ENCODE measurements at regions of chr6 and their contacts with region 1.

Region 1: GRCh38 chr6:87589693-87590549 is at the starts of genes ORC3 and RARS2:
- DNase-seq: peak; percentile 96
- H3K4me3 Mint-ChIP-seq: peak within 1 kb of the TSS; percentile 94
- H3K27ac Mint-ChIP-seq: peak within 1 kb of the TSS; percentile 77
- H3K4me1 Mint-ChIP-seq: peaks cover 43% of the 10 kb centered on the region
- H3K27me3 Mint-ChIP-seq: no peaks in the 10 kb centered on the region
- CTCF ChIP-seq: no peak
- total RNA-seq, gene ORC3: 19.4 and 21.1 TPM in 2 replicates
- total RNA-seq, gene RARS2: 29.9 and 31.0 TPM in 2 replicates

Region 2: GRCh38 chr6:87393022-87393622 is 196.8 kb before region 1 on chr6:
- CTCF ChIA-PET with region 1: interaction called, 9 read pairs
- POLR2A ChIA-PET with region 1: interaction called, 4 read pairs
- intact Hi-C with region 1: loop called (anchors 5 kb)
- DNase-seq: peak; percentile 58
- H3K4me3 Mint-ChIP-seq: no peak overlapping the region
- H3K27ac Mint-ChIP-seq: no peak overlapping the region
- H3K4me1 Mint-ChIP-seq: no peaks in the 10 kb centered on the region
- H3K27me3 Mint-ChIP-seq: no peaks in the 10 kb centered on the region
- CTCF ChIP-seq: peak; percentile 71

Region 3: GRCh38 chr6:87407901-87408720 is 181.8 kb before region 1 on chr6 and contains the start of gene CFAP206:
- CTCF ChIA-PET with region 1: no interaction called
- POLR2A ChIA-PET with region 1: interaction called, 3 read pairs
- intact Hi-C with region 1: loop called (anchors 5 kb)
- DNase-seq: peak; percentile 76
- H3K4me3 Mint-ChIP-seq: peak within 1 kb of the TSS; percentile 80
- H3K27ac Mint-ChIP-seq: peak within 1 kb of the TSS; percentile 37
- H3K4me1 Mint-ChIP-seq: no peaks in the 10 kb centered on the region
- H3K27me3 Mint-ChIP-seq: peaks cover 15% of the 10 kb centered on the region
- CTCF ChIP-seq: peak; percentile 19
- total RNA-seq, gene CFAP206: 0.27 TPM in 1 of 2 replicates, not detected in the other

Region 4: DNA sequence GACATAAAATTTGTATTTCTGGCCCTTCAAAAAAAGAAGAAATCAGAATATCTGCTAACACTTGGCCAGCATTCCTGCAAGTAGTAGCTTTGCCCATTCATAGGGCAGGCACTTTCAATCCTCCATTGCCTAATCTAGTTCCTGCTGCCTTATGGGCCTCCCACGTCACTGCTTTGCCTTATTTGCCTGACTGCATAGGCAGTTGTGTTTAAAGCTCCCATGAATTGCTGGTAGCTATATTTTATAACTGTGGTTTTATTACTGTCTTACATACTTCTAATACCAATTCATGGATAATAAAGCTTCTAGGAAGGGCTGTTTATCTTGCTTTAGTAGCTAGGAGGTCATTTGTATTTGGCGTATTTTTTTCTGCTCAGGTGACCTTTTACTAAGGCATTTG is 124.9 kb before region 1 on chr6:
- CTCF ChIA-PET with region 1: no interaction called
- POLR2A ChIA-PET with region 1: no interaction called
- intact Hi-C with region 1: no loop called
- DNase-seq: no peak
- H3K4me3 Mint-ChIP-seq: no peak overlapping the region
- H3K27ac Mint-ChIP-seq: no peak overlapping the region
- H3K4me1 Mint-ChIP-seq: no peaks in the 10 kb centered on the region
- H3K27me3 Mint-ChIP-seq: peaks cover 62% of the 10 kb centered on the region
- CTCF ChIP-seq: no peak

Region 5: GRCh38 chr6:87540539-87540938 is 49.4 kb before region 1 on chr6:
- CTCF ChIA-PET with region 1: no interaction called
- POLR2A ChIA-PET with region 1: no interaction called
- intact Hi-C with region 1: no loop called
- DNase-seq: no peak
- H3K4me3 Mint-ChIP-seq: no peak overlapping the region
- H3K27ac Mint-ChIP-seq: no peak overlapping the region
- H3K4me1 Mint-ChIP-seq: no peaks in the 10 kb centered on the region
- H3K27me3 Mint-ChIP-seq: no peaks in the 10 kb centered on the region
- CTCF ChIP-seq: no peak

Region 6: DNA sequence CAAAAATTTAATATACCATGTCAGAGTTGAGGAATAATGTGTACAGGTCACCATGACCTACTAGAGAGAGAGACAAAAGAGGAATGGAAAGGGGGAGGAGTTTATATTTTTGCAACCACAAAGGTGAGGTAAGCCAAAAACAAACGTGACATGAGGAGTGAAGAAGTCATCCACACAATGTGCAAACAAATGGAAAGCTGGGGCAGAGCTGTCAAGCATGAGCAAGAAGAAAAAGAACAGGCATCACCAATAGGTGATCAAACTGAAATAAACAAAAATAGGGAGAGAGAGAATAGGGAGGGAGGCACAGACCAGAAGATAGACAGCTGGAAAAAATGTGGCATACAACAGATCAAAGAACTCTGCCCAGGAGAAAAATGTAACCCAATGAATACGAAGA is 15.6 kb before region 1 on chr6:
- CTCF ChIA-PET with region 1: no interaction called
- POLR2A ChIA-PET with region 1: interaction called, 31 read pairs
- intact Hi-C with region 1: no loop called
- DNase-seq: peak; percentile 24
- H3K4me3 Mint-ChIP-seq: no peak overlapping the region
- H3K27ac Mint-ChIP-seq: peak overlapping the region; percentile 4
- H3K4me1 Mint-ChIP-seq: peaks cover 32% of the 10 kb centered on the region
- H3K27me3 Mint-ChIP-seq: no peaks in the 10 kb centered on the region
- CTCF ChIP-seq: no peak

Region 7: GRCh38 chr6:87600576-87600975 is 10.7 kb after region 1 on chr6:
- CTCF ChIA-PET with region 1: no interaction called
- POLR2A ChIA-PET with region 1: interaction called, 10 read pairs
- intact Hi-C with region 1: no loop called
- DNase-seq: peak; percentile 8
- H3K4me3 Mint-ChIP-seq: no peak overlapping the region
- H3K27ac Mint-ChIP-seq: no peak overlapping the region
- H3K4me1 Mint-ChIP-seq: no peaks in the 10 kb centered on the region
- H3K27me3 Mint-ChIP-seq: no peaks in the 10 kb centered on the region
- CTCF ChIP-seq: no peak

Region 8: GRCh38 chr6:87756858-87757257 is 166.9 kb after region 1 on chr6:
- CTCF ChIA-PET with region 1: no interaction called
- POLR2A ChIA-PET with region 1: no interaction called
- intact Hi-C with region 1: no loop called
- DNase-seq: peak; percentile 73
- H3K4me3 Mint-ChIP-seq: no peak overlapping the region
- H3K27ac Mint-ChIP-seq: no peak overlapping the region
- H3K4me1 Mint-ChIP-seq: peaks cover 6% of the 10 kb centered on the region
- H3K27me3 Mint-ChIP-seq: no peaks in the 10 kb centered on the region
- CTCF ChIP-seq: no peak

Region 9: GRCh38 chr6:87789198-87789899 is 199.4 kb after region 1 on chr6:
- CTCF ChIA-PET with region 1: no interaction called
- POLR2A ChIA-PET with region 1: interaction called, 5 read pairs
- intact Hi-C with region 1: loop called (anchors 2 kb)
- DNase-seq: peak; percentile 92
- H3K4me3 Mint-ChIP-seq: no peak overlapping the region
- H3K27ac Mint-ChIP-seq: peak overlapping the region; percentile 40
- H3K4me1 Mint-ChIP-seq: peaks cover 18% of the 10 kb centered on the region
- H3K27me3 Mint-ChIP-seq: no peaks in the 10 kb centered on the region
- CTCF ChIP-seq: no peak

Region 10: DNA sequence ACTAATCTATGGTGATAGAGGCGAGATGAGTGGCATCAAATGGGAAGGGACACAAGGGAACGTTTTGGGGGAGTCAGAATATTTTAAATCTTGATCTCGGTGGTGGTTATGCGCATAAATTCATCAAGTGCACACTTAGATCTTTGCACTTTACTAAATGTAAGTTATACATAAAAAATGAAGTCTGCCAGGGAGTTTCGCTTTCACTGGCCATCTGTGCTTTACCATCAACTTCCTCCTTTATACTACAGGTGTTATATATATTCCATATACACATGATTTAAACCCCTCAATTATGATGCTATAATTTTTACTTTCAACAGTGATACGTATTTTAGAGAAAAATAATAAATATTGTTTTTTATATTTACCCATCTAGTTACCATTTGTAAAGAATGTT is 209.7 kb after region 1 on chr6:
- CTCF ChIA-PET with region 1: interaction called, 3 read pairs
- POLR2A ChIA-PET with region 1: interaction called, 5 read pairs
- intact Hi-C with region 1: loop called (anchors 1 kb)
- DNase-seq: no peak
- H3K4me3 Mint-ChIP-seq: no peak overlapping the region
- H3K27ac Mint-ChIP-seq: no peak overlapping the region
- H3K4me1 Mint-ChIP-seq: peaks cover 18% of the 10 kb centered on the region
- H3K27me3 Mint-ChIP-seq: no peaks in the 10 kb centered on the region
- CTCF ChIP-seq: no peak